HCT116 (cell line): ENCODE measurements at regions of chr7 and their contacts with region 1.

Region 1: GRCh38 chr7:149873074-149873969 is at the start of gene ATP6V0E2:
- DNase-seq: peak; percentile 78
- ATAC-seq: peak; percentile 94
- H3K4me3 ChIP-seq: peak within 1 kb of the TSS; percentile 61 to 81
- H3K27ac ChIP-seq: peak within 1 kb of the TSS; percentile 60
- H3K4me1 ChIP-seq: peaks cover 9 to 25% of the 10 kb centered on the region in 2 experiments; a peak in 3 of 4 replicates
- H3K27me3 ChIP-seq: no peaks in the 10 kb centered on the region
- CTCF ChIP-seq: no peak
- POLR2A ChIP-seq: peak; percentile 16
- RAD21 ChIP-seq: no peak
- total RNA-seq, gene ATP6V0E2: 25.5 TPM

Region 2: GRCh38 chr7:149838224-149838947 is 34.9 kb before region 1 on chr7 and contains the start of gene ZNF862:
- CTCF ChIA-PET with region 1: no interaction called
- POLR2A ChIA-PET with region 1: interaction called, 3 read pairs
- RAD21 ChIA-PET with region 1: no interaction called
- intact Hi-C with region 1: loop called (anchors 2 kb)
- DNase-seq: peak; percentile 97
- ATAC-seq: peak; percentile 95
- H3K4me3 ChIP-seq: peak within 1 kb of the TSS; percentile 87 to 89
- H3K27ac ChIP-seq: peak within 1 kb of the TSS; percentile 84
- H3K4me1 ChIP-seq: peaks cover 10 to 17% of the 10 kb centered on the region in 2 experiments; a peak in 3 of 4 replicates
- H3K27me3 ChIP-seq: no peaks in the 10 kb centered on the region
- CTCF ChIP-seq: no peak
- POLR2A ChIP-seq: peak; percentile 59
- RAD21 ChIP-seq: no peak; the same call in 1 of the 2 replicates
- total RNA-seq, gene ZNF862: 8.5 TPM